Head of caudate nucleus (tissue), 42 donors: ENCODE measurements at regions of chr2 and their contacts with region 1.

Region 1: DNA sequence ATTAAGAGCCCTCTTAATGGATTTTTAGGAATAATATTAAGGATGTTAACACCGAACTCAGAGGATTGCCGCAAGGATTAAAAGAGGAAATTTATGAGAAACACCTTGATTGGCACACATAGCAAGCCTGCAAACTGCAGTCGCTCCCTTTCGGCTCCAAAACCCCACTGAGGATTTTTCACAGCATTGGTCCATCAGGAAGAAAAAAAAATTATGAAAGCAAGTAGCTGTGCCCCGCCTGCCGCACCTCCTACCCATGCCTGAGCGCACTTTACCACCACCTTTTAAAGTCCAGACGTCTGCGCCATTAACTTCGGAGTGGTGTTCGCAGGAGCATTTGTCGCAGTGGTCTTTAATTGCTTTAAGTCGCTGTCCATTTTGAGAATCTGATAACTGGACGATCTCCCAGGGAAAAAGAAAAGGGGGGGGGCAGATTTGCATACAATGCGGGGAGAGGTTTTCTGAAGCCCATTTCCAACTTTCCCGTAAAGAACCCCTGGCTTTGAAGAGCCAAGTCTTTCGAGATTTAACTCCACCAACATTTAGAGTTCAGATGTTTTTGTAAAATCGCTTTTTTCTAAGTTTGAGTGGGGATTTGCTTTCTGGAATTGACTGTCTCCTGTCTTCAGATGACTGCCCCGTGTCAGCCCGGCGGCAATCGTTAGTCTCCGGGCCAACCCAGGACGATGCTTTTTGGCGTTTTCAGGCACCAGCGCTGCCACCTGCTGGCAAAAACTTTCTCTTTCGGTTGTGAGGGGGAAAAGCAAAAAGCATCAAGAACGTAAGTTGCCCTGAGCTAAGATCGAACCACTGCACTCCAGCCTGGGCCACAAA is 914 bp upstream of the TRABD2A start:
- DNase-seq: peak; percentile 65 to 90 (median 80)

Region 2: GRCh38 chr2:84495539-84496146 is 386.2 kb before region 1 on chr2:
- intact Hi-C with region 1: loop called (anchors 10 kb)
- DNase-seq: peak in 12 of 42 donors; percentile 12 to 62 (median 19)

Region 3: DNA sequence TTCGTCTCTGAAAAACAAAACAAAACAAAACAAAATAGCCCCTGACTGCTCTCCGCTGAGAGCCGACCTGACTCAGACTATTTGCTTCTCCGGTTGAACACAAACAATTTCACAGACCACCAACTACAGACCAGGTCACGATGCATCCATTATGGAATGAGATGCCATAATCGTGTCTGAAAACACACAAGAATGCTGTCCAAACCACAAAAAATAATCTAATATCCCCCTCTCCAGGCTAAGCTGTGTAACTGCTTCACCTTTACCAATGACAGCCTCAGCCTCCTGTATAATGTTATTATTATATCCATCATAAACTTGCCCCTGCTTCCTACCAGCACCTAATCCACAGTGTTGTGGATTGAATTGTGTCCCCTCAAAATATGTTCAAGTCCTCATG is 250.8 kb before region 1 on chr2:
- intact Hi-C with region 1: no loop called
- DNase-seq: peak in 3 of 42 donors; percentile 1 to 13 (median 7)

Region 4: GRCh38 chr2:84792856-84793522 is 88.8 kb before region 1 on chr2:
- intact Hi-C with region 1: no loop called
- DNase-seq: no peak

Region 5: GRCh38 chr2:85066874-85067351 is 185.1 kb after region 1 on chr2:
- intact Hi-C with region 1: no loop called
- DNase-seq: peak; percentile 45 to 87 (median 72)

Region 6: DNA sequence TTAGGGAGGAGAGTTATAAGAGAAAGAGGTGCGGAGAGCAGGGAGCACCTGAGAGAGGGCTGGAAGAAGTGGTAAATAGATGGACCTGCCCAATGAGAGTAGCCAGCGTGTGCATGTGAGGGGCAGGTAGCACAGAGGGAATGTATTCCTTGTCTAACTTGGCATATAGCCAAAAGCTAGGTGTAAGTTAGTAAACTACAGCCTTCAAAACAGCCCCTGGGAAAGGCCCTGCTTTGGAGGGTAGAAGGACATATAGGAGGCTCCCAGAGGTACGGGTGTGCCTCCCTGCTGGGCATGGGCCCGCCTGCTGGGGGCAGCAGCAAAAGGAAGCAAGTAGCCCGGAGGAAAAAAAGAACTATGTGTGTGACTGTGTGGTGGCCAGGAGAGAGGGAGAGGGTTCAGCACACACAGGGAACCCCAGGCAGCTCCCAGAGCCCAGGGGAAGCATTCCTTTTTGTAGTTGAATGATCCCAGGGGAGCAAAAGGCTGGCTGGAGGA is 299.4 kb after region 1 on chr2:
- intact Hi-C with region 1: no loop called
- DNase-seq: no peak